Activated naive CD4-positive, alpha-beta T cell treated with anti-CD3 and anti-CD28 coated beads for 36 hours (primary cell): ENCODE measurements at regions of chr6 and their contacts with region 1.

Region 1: DNA sequence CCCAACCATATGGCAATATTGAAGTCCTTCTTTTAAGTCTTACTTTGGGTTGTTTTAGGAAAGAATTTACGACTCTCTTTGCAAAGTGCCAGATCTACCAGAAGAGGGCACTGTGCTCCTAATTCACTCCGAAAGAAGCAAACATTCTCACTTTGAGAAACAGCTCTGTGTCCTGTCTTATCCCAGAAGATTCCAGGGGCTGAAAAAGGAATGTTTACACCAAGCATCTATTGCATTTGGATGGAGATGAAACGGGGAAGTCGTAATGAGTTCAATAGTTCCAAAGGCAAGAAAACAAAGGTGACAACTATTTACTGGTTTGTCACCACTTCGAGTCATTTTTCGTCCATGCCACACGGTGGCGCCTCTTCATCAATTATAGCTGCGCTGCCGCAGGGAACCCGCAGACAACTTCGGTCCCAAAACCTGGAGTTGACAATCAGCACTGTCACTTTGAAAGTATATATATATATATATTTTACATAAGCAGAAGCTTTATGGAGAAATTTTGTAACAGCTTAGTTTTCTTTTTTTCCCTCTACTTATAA is 121.6 kb downstream of the MOXD1 start:
- DNase-seq: peak; percentile 78
- H3K4me3 Mint-ChIP-seq: peak overlapping the region; percentile 64
- H3K27ac Mint-ChIP-seq: no peak overlapping the region
- H3K4me1 Mint-ChIP-seq: no peaks in the 10 kb centered on the region
- H3K27me3 Mint-ChIP-seq: peaks cover 14% of the 10 kb centered on the region

Region 2: DNA sequence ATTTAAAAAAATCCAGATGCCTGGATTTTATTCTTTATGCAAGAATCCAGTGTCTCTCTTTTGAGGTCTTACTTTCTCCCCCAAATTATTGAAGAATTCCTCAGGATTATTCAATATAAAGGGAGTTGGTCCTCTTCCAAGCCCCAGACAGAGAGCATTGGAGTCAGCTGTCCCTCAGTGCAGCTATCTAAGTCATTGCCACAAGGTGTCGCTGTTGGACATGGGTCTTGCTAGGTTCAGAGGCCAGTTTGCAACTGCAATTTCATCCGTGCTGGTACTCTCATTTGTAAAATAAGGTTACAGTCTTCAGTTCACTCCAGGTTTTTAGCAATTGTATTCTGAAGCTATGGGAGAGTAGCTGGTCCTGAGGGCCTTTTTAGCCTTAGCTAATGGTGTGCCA is 356.3 kb before region 1 on chr6:
- CTCF ChIA-PET with region 1: interaction called, 6 read pairs
- intact Hi-C with region 1: loop called (anchors 2 kb)
- DNase-seq: peak; percentile 73
- H3K4me3 Mint-ChIP-seq: no peak overlapping the region
- H3K27ac Mint-ChIP-seq: no peak overlapping the region
- H3K4me1 Mint-ChIP-seq: no peaks in the 10 kb centered on the region
- H3K27me3 Mint-ChIP-seq: peaks cover 18% of the 10 kb centered on the region

Region 3: DNA sequence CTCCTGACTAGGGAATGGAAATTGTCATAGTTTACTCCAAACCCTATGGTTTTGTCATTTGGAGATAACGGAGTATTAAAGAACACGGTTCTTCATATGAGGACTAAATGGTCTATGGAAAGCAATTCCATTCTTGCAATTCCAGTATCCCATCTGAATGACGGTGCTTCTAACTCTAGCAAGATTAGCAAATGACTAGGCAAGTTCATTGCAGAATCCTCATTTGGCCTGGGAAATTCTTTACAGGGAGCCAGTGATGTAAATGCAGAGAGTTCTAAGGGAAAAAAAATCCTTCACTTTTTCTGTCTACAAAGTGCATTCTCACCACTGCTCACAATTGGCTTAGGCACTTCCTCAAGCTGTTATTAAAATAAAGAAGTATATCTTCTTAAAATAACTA is 10.1 kb after region 1 on chr6:
- CTCF ChIA-PET with region 1: interaction called, 46 read pairs
- intact Hi-C with region 1: no loop called
- DNase-seq: no peak
- H3K4me3 Mint-ChIP-seq: no peak overlapping the region
- H3K27ac Mint-ChIP-seq: no peak overlapping the region
- H3K4me1 Mint-ChIP-seq: no peaks in the 10 kb centered on the region
- H3K27me3 Mint-ChIP-seq: peaks cover 16% of the 10 kb centered on the region

Region 4: GRCh38 chr6:132401120-132401945 is 121.7 kb after region 1 on chr6 and contains the start of gene MOXD1:
- CTCF ChIA-PET with region 1: interaction called, 10 read pairs
- intact Hi-C with region 1: no loop called
- DNase-seq: peak; percentile 5
- H3K4me3 Mint-ChIP-seq: peak within 1 kb of the TSS; percentile 41
- H3K27ac Mint-ChIP-seq: no peak within 1 kb of the TSS
- H3K4me1 Mint-ChIP-seq: peaks cover 18% of the 10 kb centered on the region
- H3K27me3 Mint-ChIP-seq: peaks cover 54% of the 10 kb centered on the region
- total RNA-seq, gene MOXD1: not detected

Region 5: GRCh38 chr6:132483779-132484679 is 204.4 kb after region 1 on chr6:
- CTCF ChIA-PET with region 1: interaction called, 155 read pairs
- intact Hi-C with region 1: loop called (anchors 1 kb)
- DNase-seq: peak; percentile 65
- H3K4me3 Mint-ChIP-seq: no peak overlapping the region
- H3K27ac Mint-ChIP-seq: no peak overlapping the region
- H3K4me1 Mint-ChIP-seq: peaks cover 24% of the 10 kb centered on the region
- H3K27me3 Mint-ChIP-seq: no peaks in the 10 kb centered on the region

Region 6: GRCh38 chr6:132623106-132623845 is 343.6 kb after region 1 on chr6:
- CTCF ChIA-PET with region 1: no interaction called
- intact Hi-C with region 1: no loop called
- DNase-seq: no peak
- H3K4me3 Mint-ChIP-seq: no peak overlapping the region
- H3K27ac Mint-ChIP-seq: no peak overlapping the region
- H3K4me1 Mint-ChIP-seq: no peaks in the 10 kb centered on the region
- H3K27me3 Mint-ChIP-seq: peaks cover 19% of the 10 kb centered on the region

Region 7: GRCh38 chr6:132768051-132768517 is 488.4 kb after region 1 on chr6:
- CTCF ChIA-PET with region 1: interaction called, 3 read pairs
- intact Hi-C with region 1: loop called (anchors 10 kb)
- DNase-seq: peak; percentile 44
- H3K4me3 Mint-ChIP-seq: no peak overlapping the region
- H3K27ac Mint-ChIP-seq: no peak overlapping the region
- H3K4me1 Mint-ChIP-seq: peaks cover 19% of the 10 kb centered on the region
- H3K27me3 Mint-ChIP-seq: no peaks in the 10 kb centered on the region